H1 (cell line): ENCODE measurements at regions of chr1 and their contacts with region 1.

Region 1: GRCh38 chr1:2194898-2195673 is 514 bp upstream of the FAAP20 start:
- DNase-seq: peak; percentile 65 to 95
- H3K4me3 ChIP-seq: peak overlapping the region; percentile 51 to 72 (median 60)
- H3K27ac ChIP-seq: peak overlapping the region; percentile 9; the same call in 1 of the 2 replicates
- H3K4me1 ChIP-seq: peaks cover 0 to 17% (median 6%) of the 10 kb centered on the region in 4 experiments; a peak in 5 of 7 replicates
- H3K27me3 ChIP-seq: no peaks in the 10 kb centered on the region
- CTCF ChIP-seq: peak in 2 of 3 experiments; percentile 94 to 96; a peak in 3 of 4 replicates
- EP300 ChIP-seq: no peak
- POLR2A ChIP-seq: 0 out of 3 replicates have a peak, but pooled peaks of 1 of the 2 experiments have one; percentile 26
- RAD21 ChIP-seq: peak; percentile 98 to 99

Region 2: DNA sequence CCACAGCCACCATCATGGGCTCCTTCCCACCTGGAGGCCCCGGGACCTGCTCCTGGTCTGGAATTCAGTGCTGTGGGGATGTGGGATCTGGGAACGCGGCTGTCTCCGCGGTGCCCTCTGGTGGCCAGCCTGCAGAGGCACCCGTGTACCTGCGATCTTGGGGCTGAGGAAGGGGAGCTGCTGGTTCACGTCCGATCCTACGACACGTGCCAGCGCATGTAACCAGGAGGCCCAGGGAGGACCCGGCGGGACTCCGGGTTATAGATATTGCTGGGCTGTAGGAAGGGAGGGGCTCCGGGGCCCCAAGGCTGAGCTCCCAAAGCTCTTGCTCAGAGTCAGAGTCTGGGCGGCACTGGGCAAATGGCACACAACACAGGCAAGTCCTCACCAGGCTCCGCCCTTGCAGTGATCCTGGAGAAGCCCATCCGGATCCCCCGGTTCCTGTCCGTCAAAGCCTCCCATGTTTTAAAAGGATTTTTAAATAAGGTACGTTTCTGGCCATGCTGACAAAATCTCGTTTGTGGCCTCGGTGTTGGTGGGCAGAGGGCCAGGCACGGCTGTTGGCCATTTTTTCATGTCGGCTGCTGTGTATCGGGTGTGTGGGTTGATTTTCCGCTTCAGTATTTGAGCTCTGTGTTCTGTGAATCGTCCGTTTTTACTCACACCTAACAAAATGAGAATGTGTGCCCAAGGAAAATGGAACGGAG is 20.6 kb before region 1 on chr1:
- CTCF ChIA-PET with region 1: interaction called, 11 read pairs
- POLR2A ChIA-PET with region 1: interaction called, 3 read pairs
- DNase-seq: peak; percentile 70 to 86
- H3K4me3 ChIP-seq: no peak overlapping the region
- H3K27ac ChIP-seq: no peak overlapping the region
- H3K4me1 ChIP-seq: no peaks in the 10 kb centered on the region; a peak in 2 of 7 replicates
- H3K27me3 ChIP-seq: no peaks in the 10 kb centered on the region
- CTCF ChIP-seq: peak in 2 of 3 experiments; percentile 94 to 98; a peak in 3 of 4 replicates
- EP300 ChIP-seq: no peak
- POLR2A ChIP-seq: no peak
- RAD21 ChIP-seq: peak; percentile 73 to 82

Region 3: GRCh38 chr1:2205191-2205952 is 10.3 kb after region 1 on chr1:
- CTCF ChIA-PET with region 1: interaction called, 14 read pairs
- POLR2A ChIA-PET with region 1: interaction called, 7 read pairs
- DNase-seq: peak; percentile 80 to 98
- H3K4me3 ChIP-seq: peak overlapping the region; percentile 30 to 68 (median 38)
- H3K27ac ChIP-seq: no peak overlapping the region
- H3K4me1 ChIP-seq: peaks cover 3 to 16% (median 9%) of the 10 kb centered on the region in 4 experiments
- H3K27me3 ChIP-seq: peaks cover 0 to 11% (median 6%) of the 10 kb centered on the region in 4 experiments; a peak in 4 of 7 replicates
- CTCF ChIP-seq: no peak
- EP300 ChIP-seq: no peak
- POLR2A ChIP-seq: peak in 1 of 2 experiments; percentile 17; a peak in 1 of 3 replicates
- RAD21 ChIP-seq: no peak

Region 4: DNA sequence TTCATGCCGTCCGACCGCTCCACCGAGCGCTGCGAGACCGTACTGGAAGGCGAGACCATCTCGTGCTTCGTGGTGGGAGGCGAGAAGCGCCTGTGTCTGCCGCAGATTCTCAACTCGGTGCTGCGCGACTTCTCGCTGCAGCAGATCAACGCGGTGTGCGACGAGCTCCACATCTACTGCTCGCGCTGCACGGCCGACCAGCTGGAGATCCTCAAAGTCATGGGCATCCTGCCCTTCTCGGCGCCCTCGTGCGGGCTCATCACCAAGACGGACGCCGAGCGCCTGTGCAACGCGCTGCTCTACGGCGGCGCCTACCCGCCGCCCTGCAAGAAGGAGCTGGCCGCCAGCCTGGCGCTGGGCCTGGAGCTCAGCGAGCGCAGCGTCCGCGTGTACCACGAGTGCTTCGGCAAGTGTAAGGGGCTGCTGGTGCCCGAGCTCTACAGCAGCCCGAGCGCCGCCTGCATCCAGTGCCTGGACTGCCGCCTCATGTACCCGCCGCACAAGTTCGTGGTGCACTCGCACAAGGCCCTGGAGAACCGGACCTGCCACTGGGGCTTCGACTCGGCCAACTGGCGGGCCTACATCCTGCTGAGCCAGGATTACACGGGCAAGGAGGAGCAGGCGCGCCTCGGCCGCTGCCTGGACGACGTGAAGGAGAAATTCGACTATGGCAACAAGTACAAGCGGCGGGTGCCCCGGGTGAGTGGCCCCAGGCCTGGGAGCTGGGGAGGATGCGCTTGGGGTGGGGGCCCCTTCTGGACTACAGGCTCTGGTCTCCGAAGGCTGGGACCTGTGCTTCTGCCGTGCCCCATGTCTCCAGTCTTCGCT is 34.2 kb after region 1 on chr1:
- CTCF ChIA-PET with region 1: interaction called, 17 read pairs
- POLR2A ChIA-PET with region 1: interaction called, 4 read pairs
- DNase-seq: no peak
- H3K4me3 ChIP-seq: peak overlapping the region; percentile 72 to 83 (median 80)
- H3K27ac ChIP-seq: no peak overlapping the region
- H3K4me1 ChIP-seq: peaks cover 0 to 47% (median 26%) of the 10 kb centered on the region in 4 experiments; a peak in 6 of 7 replicates
- H3K27me3 ChIP-seq: no peaks in the 10 kb centered on the region
- CTCF ChIP-seq: no peak
- EP300 ChIP-seq: no peak
- POLR2A ChIP-seq: no peak
- RAD21 ChIP-seq: no peak

Region 5: DNA sequence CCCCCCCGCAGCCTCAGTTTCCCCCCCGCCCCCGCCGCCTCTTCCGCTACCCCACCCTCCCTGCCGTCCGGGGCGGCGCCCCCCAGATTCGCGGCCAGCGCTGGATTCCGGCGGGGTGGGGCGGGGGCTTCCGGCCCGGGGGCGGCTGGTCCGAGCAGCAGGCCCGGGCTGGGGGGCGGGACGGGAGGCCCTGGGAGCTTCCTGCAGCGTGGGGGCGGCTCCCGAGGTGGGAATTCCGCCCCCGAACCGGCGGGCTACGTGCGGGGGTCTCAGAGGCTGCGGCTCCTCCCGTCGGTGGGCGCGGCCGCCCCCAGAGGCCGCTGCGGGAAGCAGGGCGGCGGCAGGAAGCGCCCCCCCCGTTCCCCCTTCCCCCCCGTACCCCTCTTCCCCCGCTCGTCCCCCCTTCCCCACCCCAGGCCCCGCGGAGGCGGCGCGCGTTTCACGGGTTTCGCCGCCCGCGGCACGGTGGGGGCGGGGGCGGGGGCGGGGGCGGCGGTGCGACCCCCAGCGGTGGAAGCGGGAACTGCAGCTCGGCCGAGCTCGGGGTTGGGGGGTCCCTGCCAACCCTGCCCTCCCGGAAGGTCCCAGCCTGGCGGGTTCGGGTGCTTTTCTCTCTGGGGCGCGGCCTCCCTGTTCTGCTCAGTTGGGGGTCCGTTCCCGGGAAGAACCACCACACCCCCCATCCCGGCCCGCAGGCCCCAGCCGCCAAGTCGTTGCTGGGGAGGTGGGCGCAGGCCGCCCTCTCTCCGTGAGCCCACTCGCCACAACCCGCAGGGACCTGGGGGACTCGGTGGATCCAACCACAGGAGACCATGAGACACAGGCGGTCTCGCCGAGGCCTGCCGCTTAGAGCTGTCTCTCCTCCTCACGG is 120.0 kb after region 1 on chr1:
- CTCF ChIA-PET with region 1: interaction called, 22 read pairs
- POLR2A ChIA-PET with region 1: interaction called, 4 read pairs
- DNase-seq: peak in 1 of 2 experiments; percentile 76
- H3K4me3 ChIP-seq: peak overlapping the region in 3 of 4 experiments; percentile 19 to 53 (median 36); a peak in 4 of 8 replicates
- H3K27ac ChIP-seq: peak overlapping the region; percentile 34; the same call in 1 of the 2 replicates
- H3K4me1 ChIP-seq: peaks cover 7 to 43% (median 30%) of the 10 kb centered on the region in 4 experiments
- H3K27me3 ChIP-seq: no peaks in the 10 kb centered on the region
- CTCF ChIP-seq: peak in 2 of 3 experiments; percentile 21 to 40; a peak in 2 of 4 replicates
- EP300 ChIP-seq: no peak
- POLR2A ChIP-seq: no peak
- RAD21 ChIP-seq: peak in 1 of 2 experiments; percentile 4; a peak in 1 of 4 replicates

Region 6: DNA sequence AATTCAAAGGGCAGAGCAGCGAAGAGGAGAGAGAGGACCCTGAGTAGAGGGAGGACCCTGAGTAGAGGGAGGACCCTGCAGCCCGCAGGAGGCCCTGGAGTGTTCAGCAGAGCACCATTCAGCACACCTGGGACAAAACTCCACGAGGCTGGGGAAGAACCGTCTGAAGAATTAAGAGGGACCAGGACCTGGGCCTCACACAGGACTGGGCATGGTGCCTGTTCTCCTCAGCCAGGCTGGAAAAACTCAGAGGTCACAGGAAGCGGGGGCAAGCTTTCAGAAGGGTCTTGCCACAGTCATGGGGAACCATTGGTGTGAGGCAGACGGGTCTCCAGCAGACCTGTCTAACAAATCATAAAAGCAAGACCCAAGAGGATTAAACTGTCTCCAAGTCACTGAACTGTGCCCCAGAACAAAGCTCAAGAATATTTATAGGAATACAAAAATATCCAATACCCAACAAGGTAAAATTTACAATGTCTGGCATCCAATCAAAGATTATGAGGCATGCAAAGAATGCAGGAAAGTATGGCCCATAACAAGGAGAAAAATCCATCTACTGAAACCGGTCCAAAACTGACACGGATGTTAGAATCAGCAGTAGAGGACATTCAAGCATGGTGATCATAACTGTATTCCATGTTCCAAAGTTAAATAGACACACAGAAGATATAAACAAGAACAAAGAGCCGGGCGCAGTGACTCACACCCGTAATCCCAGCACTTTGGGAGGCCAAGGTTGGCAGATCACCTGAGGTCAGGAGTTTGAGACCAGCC is 165.7 kb after region 1 on chr1:
- CTCF ChIA-PET with region 1: interaction called, 10 read pairs
- POLR2A ChIA-PET with region 1: no interaction called
- DNase-seq: no peak
- H3K4me3 ChIP-seq: no peak overlapping the region
- H3K27ac ChIP-seq: no peak overlapping the region
- H3K4me1 ChIP-seq: no peaks in the 10 kb centered on the region; a peak in 1 of 7 replicates
- H3K27me3 ChIP-seq: no peaks in the 10 kb centered on the region
- CTCF ChIP-seq: no peak
- EP300 ChIP-seq: no peak
- POLR2A ChIP-seq: no peak
- RAD21 ChIP-seq: no peak

Region 7: DNA sequence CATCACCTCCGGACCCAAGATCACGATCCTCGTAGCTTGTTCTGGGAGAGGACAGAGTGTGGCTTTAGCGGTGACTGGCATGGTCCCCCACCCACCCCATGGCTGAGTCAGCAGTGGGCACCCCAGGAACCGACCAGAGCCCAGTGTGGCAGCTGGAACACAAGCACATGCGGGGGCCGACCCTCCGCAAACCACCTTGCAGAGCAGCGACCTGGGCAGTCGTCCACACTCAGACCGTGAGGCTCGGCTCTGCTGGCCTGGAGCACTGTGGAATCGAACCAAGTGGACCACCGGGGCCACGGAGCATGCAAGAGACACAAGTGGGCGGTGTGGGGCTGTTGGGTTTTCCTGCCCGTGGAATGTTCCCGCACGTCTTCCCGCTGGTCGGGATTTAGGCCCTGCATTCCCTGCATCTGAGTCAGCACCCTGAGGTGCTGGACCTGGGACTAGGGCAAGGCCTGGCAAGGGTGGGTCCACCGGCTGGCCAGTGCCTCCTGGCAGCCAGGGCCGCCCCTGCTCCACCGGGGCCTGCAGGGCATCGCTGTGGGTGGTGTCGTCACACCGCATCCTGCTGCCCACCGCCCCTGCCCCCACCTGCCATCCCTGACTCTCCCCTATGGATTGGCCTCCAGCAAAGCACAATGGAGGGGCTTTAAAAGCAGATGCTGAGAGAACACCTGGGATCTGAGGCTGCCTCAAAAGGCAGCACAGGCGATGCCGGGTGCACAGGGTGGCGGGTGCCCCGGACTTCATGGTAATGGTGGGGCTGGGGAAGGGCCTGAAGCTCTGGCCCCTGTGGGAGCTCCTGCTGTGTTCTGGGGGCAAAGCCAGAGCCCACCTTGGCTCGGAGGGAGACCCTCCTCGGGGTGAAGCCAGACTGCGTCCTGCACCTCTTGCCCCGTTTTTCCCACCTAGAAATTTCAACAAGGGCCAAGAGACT is 177.7 kb after region 1 on chr1:
- CTCF ChIA-PET with region 1: interaction called, 15 read pairs
- POLR2A ChIA-PET with region 1: interaction called, 16 read pairs
- DNase-seq: no peak
- H3K4me3 ChIP-seq: no peak overlapping the region
- H3K27ac ChIP-seq: no peak overlapping the region
- H3K4me1 ChIP-seq: no peaks in the 10 kb centered on the region
- H3K27me3 ChIP-seq: no peaks in the 10 kb centered on the region; a peak in 1 of 7 replicates
- CTCF ChIP-seq: no peak
- EP300 ChIP-seq: no peak
- POLR2A ChIP-seq: no peak
- RAD21 ChIP-seq: no peak